ENCODE measurements at regions of chr19 and their contacts with region 1.

Region 1: GRCh38 chr19:35204799-35205732 is 23.5 kb downstream of the FAM187B start:
- DNase-seq: peak in 2 of 4 experiments; percentile 52 to 68
- ATAC-seq: peak; percentile 87
- H3K4me3 ChIP-seq: no peak overlapping the region
- H3K27ac ChIP-seq: peak overlapping the region; percentile 83
- H3K4me1 ChIP-seq: peaks cover 25 to 39% of the 10 kb centered on the region in 2 experiments
- H3K27me3 ChIP-seq: no peaks in the 10 kb centered on the region
- CTCF ChIP-seq: no peak
- EP300 ChIP-seq: 0 out of 2 replicates have a peak, but pooled peaks have one; percentile 2
- POLR2A ChIP-seq: no peak
- RAD21 ChIP-seq: peak in 1 of 2 experiments; percentile 24; a peak in 3 of 4 replicates

Region 2: GRCh38 chr19:35154525-35155406 is 50.3 kb before region 1 on chr19 and contains the start of gene FXYD5:
- CTCF ChIA-PET with region 1: no interaction called
- POLR2A ChIA-PET with region 1: no interaction called
- in situ Hi-C with region 1: no loop called
- intact Hi-C with region 1: loop called (anchors 5 kb)
- DNase-seq: peak; percentile 88 to 94 (median 91)
- ATAC-seq: peak; percentile 92
- H3K4me3 ChIP-seq: peak within 1 kb of the TSS; percentile 92
- H3K27ac ChIP-seq: peak within 1 kb of the TSS; percentile 95
- H3K4me1 ChIP-seq: peaks cover 13 to 44% of the 10 kb centered on the region in 2 experiments; a peak in 4 of 5 replicates
- H3K27me3 ChIP-seq: no peaks in the 10 kb centered on the region
- CTCF ChIP-seq: peak in 2 of 3 experiments; percentile 16 to 18; a peak in 2 of 6 replicates
- EP300 ChIP-seq: 0 out of 2 replicates have a peak, but pooled peaks have one; percentile 30
- POLR2A ChIP-seq: peak; percentile 94
- RAD21 ChIP-seq: peak in 1 of 2 experiments; percentile 22; a peak in 3 of 4 replicates
- polyA plus RNA-seq, gene FXYD5: 125 to 198 TPM

Region 3: GRCh38 chr19:35168207-35168606 is 36.9 kb before region 1 on chr19:
- CTCF ChIA-PET with region 1: no interaction called
- POLR2A ChIA-PET with region 1: interaction called, 8 read pairs
- in situ Hi-C with region 1: no loop called
- intact Hi-C with region 1: loop called (anchors 5 kb)
- DNase-seq: peak in 1 of 4 experiments; percentile 30
- ATAC-seq: no peak
- H3K4me3 ChIP-seq: no peak overlapping the region
- H3K27ac ChIP-seq: no peak overlapping the region; the same call in 2 of the 3 replicates
- H3K4me1 ChIP-seq: peaks cover 48 to 52% of the 10 kb centered on the region in 2 experiments
- H3K27me3 ChIP-seq: no peaks in the 10 kb centered on the region; a peak in 1 of 5 replicates
- CTCF ChIP-seq: no peak
- EP300 ChIP-seq: no peak
- POLR2A ChIP-seq: peak; percentile 54
- RAD21 ChIP-seq: no peak

Region 4: DNA sequence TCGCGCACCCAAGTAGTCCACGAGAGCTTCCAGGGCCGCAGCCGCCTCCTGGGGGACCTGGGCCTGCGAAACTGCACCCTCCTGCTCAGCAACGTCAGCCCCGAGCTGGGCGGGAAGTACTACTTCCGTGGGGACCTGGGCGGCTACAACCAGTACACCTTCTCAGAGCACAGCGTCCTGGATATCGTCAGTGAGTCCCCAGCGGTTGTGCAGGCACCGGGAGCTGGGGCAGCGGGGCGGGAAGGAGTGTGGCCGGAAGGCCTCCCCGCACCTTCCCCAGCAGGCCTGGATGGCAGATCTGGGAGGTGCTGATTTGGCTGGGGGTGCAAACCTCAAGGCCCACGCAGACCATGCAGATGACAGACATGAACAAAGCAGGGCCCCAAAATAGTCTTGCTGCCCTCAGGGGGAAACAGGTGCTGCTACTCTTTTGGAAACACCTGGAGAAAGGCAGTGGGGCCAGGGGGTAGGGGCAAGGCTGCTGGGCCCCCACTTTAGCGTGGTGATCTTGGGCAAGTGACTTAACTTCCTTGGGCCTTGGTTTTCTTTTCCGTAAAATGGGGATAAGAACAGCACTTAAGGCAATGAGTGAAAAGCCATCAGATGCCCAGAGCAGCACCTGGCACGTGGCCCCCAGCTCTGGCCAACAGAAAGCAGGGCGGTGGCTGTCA is 90.9 kb after region 1 on chr19:
- CTCF ChIA-PET with region 1: no interaction called
- POLR2A ChIA-PET with region 1: no interaction called
- in situ Hi-C with region 1: no loop called
- intact Hi-C with region 1: no loop called
- DNase-seq: peak; percentile 43 to 66 (median 56)
- ATAC-seq: peak; percentile 47
- H3K4me3 ChIP-seq: no peak overlapping the region
- H3K27ac ChIP-seq: no peak overlapping the region
- H3K4me1 ChIP-seq: peaks cover 43 to 78% of the 10 kb centered on the region in 2 experiments
- H3K27me3 ChIP-seq: peaks cover 2 to 12% of the 10 kb centered on the region in 2 experiments; a peak in 3 of 5 replicates
- CTCF ChIP-seq: no peak
- EP300 ChIP-seq: peak; percentile 17; the same call in 1 of the 2 replicates
- POLR2A ChIP-seq: no peak
- RAD21 ChIP-seq: no peak